ENCODE measurements at regions of chr10 and their contacts with region 1.

Region 1: GRCh38 chr10:35563261-35563891 is 41.8 kb upstream of the GJD4 start:
- DNase-seq: no peak

Region 2: DNA sequence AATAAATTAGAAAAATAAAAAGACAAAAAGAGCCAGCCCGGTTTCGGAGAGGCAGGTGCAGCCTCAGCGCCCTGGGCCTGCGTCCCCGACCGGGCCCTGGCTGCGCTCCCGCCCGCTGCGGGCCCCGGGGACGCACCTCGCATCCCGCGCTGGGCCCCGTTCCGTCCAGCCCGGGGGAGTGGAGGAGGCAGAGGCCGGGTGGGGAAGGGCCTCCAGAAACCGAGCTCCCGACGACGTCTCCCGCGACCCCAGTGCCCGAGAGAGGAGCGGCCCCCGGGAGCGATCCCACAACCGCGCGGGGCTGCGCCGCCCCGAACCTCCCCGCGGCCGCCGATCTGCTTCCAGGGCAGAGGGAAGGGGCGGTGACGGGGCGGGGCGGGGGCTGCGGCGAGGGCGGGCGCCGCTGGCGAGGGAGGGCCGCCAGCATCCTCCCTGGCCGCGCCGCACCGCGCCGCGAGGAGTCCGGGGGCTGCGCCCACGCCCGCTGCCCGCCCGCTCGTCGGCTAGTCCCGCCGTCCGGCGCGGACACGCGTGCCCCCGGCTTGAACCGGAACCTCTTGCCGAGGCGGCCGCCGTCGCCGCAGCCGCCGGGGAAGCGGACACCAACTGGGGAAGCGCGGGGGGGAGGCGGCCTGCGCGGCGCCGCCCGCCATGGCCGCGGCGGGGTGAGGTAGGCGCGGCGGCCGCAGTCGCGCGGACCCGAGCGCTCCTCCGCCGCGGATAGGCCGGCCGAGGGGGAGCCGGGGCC is 227.1 kb before region 1 on chr10 and contains the start of gene CCNY:
- intact Hi-C with region 1: loop called (anchors 5 kb)
- DNase-seq: peak; percentile 92
- total RNA-seq, gene CCNY: 83.4 TPM

Region 3: DNA sequence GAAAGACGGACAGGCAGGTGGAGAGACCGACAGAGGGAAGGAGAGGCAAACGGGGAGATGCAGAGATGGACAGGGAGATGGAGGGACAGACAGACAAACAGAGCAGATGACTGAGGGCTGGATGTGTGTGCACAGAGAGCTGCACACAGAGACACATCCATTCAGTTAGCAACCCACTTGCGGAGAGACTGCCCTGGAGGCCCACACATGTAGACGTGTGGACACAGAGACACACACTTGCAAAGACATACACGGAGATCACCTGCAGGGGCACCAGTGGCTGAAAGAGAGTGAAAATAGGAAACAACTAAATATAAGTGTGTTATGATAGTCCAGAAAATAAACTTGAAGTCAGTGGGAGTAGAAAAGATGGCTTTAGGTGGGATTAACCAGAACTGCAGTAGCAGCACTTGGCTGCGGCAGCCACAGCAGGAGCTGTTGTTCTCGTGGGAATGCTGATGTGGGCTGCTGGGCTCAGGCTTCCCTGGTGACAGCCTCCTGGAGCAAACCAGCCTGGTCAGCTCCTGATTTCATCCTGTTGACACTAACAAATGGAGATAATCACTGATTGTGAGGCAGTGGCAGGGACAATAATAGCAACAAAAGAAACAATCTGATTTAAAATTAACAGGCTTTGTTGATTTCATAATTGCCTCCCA is 93.0 kb before region 1 on chr10:
- intact Hi-C with region 1: loop called (anchors 5 kb)
- DNase-seq: no peak

Measured in cardiac septum (tissue), 1 donor.